IMR-90 (cell line): ENCODE measurements at regions of chr10 and their contacts with region 1.

Region 1: GRCh38 chr10:99976886-99977665 is 32.7 kb downstream of the DNMBP start:
- DNase-seq: peak; percentile 92
- ATAC-seq: peak; percentile 94
- H3K4me3 ChIP-seq: no peak overlapping the region
- H3K27ac ChIP-seq: 0 out of 2 replicates have a peak overlapping the region, but pooled peaks have one; percentile 30
- H3K4me1 ChIP-seq: peaks cover 14% of the 10 kb centered on the region
- H3K27me3 ChIP-seq: no peaks in the 10 kb centered on the region
- CTCF ChIP-seq: no peak
- POLR2A ChIP-seq: no peak
- RAD21 ChIP-seq: 0 out of 2 replicates have a peak, but pooled peaks have one; percentile 17

Region 2: DNA sequence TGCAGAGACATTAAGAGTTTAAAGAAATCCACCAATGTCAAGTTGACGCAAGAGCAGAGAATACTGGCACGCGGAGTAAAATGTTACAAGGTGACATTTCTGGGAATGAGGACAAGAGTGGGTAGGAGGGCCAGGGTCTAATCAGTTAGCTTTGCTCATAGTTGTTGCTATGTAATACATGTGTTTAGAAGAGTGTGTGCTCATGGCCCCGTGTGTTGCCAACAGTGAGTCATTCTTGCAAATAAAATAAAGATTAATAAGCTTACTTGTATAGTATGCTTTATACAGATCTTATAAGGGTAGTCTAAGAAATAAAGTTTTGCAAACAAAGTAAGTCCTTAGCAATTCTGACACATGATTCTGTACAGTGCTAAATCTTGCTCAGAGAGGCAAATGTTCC is 31.8 kb before region 1 on chr10:
- CTCF ChIA-PET with region 1: no interaction called
- POLR2A ChIA-PET with region 1: no interaction called
- dilution Hi-C with region 1: no loop called
- in situ Hi-C with region 1: no loop called
- intact Hi-C with region 1: loop called (anchors 2 kb)
- DNase-seq: peak; percentile 93
- ATAC-seq: peak; percentile 85
- H3K4me3 ChIP-seq: no peak overlapping the region
- H3K27ac ChIP-seq: no peak overlapping the region
- H3K4me1 ChIP-seq: peaks cover 6% of the 10 kb centered on the region
- H3K27me3 ChIP-seq: no peaks in the 10 kb centered on the region
- CTCF ChIP-seq: no peak
- POLR2A ChIP-seq: no peak
- RAD21 ChIP-seq: no peak